PC-9 (cell line): ENCODE measurements at regions of chr5 and their contacts with region 1.

Region 1: DNA sequence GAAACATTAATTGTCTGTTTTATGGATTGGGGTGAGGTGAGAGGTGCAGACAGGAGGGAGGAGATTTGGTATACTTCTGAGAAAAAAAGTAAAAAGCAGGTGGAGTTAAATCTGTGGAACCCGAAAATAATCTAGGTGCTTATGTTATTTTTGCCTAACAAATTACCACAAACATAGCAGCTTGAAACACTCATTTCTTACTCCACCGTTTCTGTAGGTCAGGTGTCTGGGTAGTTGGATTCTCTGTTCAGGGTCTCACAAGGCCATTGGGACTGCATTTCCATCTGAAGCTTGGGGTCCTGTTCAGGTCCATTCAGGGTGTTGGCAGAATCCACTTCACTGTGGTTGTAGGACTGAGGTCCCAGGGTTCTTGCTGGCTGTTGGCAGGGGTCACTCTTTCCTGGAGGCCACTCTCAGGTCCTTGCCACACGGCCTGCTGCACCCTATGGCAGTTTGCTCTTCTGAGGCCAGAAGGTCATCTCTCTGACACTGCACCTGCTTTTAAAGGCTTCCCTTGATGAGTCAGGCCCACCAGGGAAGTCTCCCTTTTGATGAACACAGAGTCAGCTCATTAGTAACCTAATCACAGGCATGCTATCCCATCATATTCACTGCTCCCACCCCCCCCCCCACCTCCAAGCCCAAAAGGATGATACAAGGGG is 82.2 kb downstream of the TRIO start:
- DNase-seq: peak in 1 of 2 experiments; percentile 43
- H3K4me3 ChIP-seq: no peak overlapping the region
- H3K27ac ChIP-seq: peak overlapping the region; percentile 33; the same call in 1 of the 2 replicates
- H3K4me1 ChIP-seq: peaks cover 24% of the 10 kb centered on the region
- H3K27me3 ChIP-seq: no peaks in the 10 kb centered on the region
- CTCF ChIP-seq: no peak

Region 2: DNA sequence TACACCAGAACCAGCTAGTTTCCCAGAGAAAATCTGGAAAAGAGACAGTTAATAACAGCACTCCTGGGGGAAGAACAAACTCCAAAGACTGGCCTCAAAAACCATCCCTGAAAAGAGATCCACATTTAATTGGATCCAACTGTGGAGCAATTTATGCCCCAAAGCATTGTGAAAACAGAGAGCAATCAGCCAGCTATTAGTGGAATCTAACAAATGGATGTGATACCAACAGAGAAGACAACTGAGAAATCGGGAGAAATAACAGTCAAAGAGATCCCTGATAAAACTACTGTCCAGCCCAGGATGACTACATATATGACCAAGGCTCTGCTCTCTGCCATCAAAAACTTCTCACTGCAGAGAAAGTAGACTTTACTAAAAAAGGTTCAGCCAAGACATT is 122.6 kb before region 1 on chr5:
- CTCF ChIA-PET with region 1: interaction called, 11 read pairs
- POLR2A ChIA-PET with region 1: no interaction called
- intact Hi-C with region 1: no loop called
- DNase-seq: no peak
- H3K4me3 ChIP-seq: no peak overlapping the region
- H3K27ac ChIP-seq: no peak overlapping the region
- H3K4me1 ChIP-seq: peaks cover 5% of the 10 kb centered on the region
- H3K27me3 ChIP-seq: no peaks in the 10 kb centered on the region
- CTCF ChIP-seq: no peak

Region 3: DNA sequence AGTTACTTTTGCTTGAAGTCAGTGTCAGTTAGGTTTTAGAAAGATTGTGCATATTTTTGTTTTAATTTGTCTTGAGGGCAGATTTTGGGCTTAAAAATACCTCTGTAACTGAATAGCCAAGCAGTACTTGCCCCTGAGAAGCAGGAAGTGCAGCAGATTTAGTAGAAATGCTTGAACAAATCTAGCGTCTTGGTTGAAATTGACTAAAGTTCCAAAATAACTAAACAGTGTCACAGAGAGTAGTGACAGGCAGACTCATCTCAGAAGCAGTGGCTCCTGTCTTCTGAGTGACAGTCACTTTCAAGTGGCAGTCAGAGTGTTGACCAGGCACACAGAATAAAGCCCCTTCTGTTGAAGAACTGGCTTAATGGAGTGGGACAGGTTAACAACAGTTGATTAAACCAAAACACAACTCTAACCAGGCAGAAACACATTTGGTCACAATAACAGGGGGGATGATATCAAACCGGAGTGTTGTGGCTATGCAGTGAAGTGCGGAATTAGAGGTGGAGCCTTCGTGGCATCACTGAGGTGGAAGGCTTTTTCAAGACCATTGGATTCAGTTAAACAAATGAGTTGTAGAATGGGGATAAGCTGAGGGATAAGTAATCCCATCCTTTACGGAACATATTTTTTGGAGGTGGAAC is 53.0 kb before region 1 on chr5:
- CTCF ChIA-PET with region 1: interaction called, 5 read pairs
- POLR2A ChIA-PET with region 1: interaction called, 11 read pairs
- intact Hi-C with region 1: no loop called
- DNase-seq: no peak
- H3K4me3 ChIP-seq: no peak overlapping the region
- H3K27ac ChIP-seq: peak overlapping the region; percentile 21; the same call in 1 of the 2 replicates
- H3K4me1 ChIP-seq: peaks cover 47% of the 10 kb centered on the region
- H3K27me3 ChIP-seq: no peaks in the 10 kb centered on the region
- CTCF ChIP-seq: no peak

Region 4: GRCh38 chr5:14270209-14270702 is 45.0 kb after region 1 on chr5:
- CTCF ChIA-PET with region 1: interaction called, 8 read pairs
- POLR2A ChIA-PET with region 1: interaction called, 8 read pairs
- intact Hi-C with region 1: loop called (anchors 1 kb)
- DNase-seq: peak; percentile 81 to 86
- H3K4me3 ChIP-seq: 0 out of 2 replicates have a peak overlapping the region, but pooled peaks have one; percentile 8
- H3K27ac ChIP-seq: peak overlapping the region; percentile 88
- H3K4me1 ChIP-seq: peaks cover 57% of the 10 kb centered on the region
- H3K27me3 ChIP-seq: no peaks in the 10 kb centered on the region
- CTCF ChIP-seq: peak; percentile 90

Region 5: DNA sequence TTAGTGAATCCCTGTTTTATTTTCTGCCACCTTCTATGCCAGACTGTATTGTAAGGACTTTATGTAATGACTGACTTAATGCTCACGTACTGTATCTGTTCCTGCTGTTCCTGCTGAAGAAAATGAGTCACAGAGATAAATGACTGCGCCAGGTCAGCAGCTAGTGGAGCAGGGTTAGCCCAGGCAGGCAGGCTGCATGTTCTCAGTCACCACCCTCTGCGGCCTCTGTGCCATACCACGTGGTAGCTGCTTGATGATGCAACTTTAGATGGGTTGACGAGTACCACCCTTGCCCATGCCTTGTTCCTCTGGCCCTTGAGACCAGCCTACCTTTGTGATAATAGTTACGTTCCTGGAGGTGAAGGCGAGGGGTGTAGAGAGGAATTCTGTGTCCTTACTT is 79.7 kb after region 1 on chr5:
- CTCF ChIA-PET with region 1: no interaction called
- POLR2A ChIA-PET with region 1: no interaction called
- intact Hi-C with region 1: no loop called
- DNase-seq: peak; percentile 49 to 67
- H3K4me3 ChIP-seq: no peak overlapping the region
- H3K27ac ChIP-seq: no peak overlapping the region
- H3K4me1 ChIP-seq: no peaks in the 10 kb centered on the region
- H3K27me3 ChIP-seq: no peaks in the 10 kb centered on the region
- CTCF ChIP-seq: no peak